Caco-2 (cell line): ENCODE measurements at regions of chr10 and their contacts with region 1.

Region 1: GRCh38 chr10:77485847-77486246 is 151.8 kb downstream of the KCNMA1 start:
- DNase-seq: peak; percentile 67 to 70
- H3K4me3 ChIP-seq: no peak overlapping the region
- H3K4me3 Mint-ChIP-seq: no peak overlapping the region
- H3K27ac Mint-ChIP-seq: no peak overlapping the region
- H3K4me1 ChIP-seq: peaks cover 23% of the 10 kb centered on the region
- H3K4me1 Mint-ChIP-seq: peaks cover 14% of the 10 kb centered on the region
- H3K27me3 ChIP-seq: no peaks in the 10 kb centered on the region
- H3K27me3 Mint-ChIP-seq: no peaks in the 10 kb centered on the region
- CTCF ChIP-seq: no peak

Region 2: GRCh38 chr10:77173615-77174461 is 312.0 kb before region 1 on chr10:
- CTCF ChIA-PET with region 1: interaction called, 10 read pairs
- POLR2A ChIA-PET with region 1: no interaction called
- intact Hi-C with region 1: loop called (anchors 10 kb)
- DNase-seq: peak; percentile 75 to 87
- H3K4me3 ChIP-seq: no peak overlapping the region
- H3K4me3 Mint-ChIP-seq: no peak overlapping the region
- H3K27ac Mint-ChIP-seq: no peak overlapping the region
- H3K4me1 ChIP-seq: no peaks in the 10 kb centered on the region
- H3K4me1 Mint-ChIP-seq: no peaks in the 10 kb centered on the region
- H3K27me3 ChIP-seq: no peaks in the 10 kb centered on the region
- H3K27me3 Mint-ChIP-seq: no peaks in the 10 kb centered on the region
- CTCF ChIP-seq: peak; percentile 84 to 94

Region 3: GRCh38 chr10:77391605-77392235 is 94.1 kb before region 1 on chr10:
- CTCF ChIA-PET with region 1: interaction called, 7 read pairs
- POLR2A ChIA-PET with region 1: no interaction called
- intact Hi-C with region 1: loop called (anchors 1 kb)
- DNase-seq: peak; percentile 79 to 81
- H3K4me3 ChIP-seq: no peak overlapping the region
- H3K4me3 Mint-ChIP-seq: no peak overlapping the region
- H3K27ac Mint-ChIP-seq: no peak overlapping the region
- H3K4me1 ChIP-seq: peaks cover 50% of the 10 kb centered on the region
- H3K4me1 Mint-ChIP-seq: peaks cover 40% of the 10 kb centered on the region
- H3K27me3 ChIP-seq: no peaks in the 10 kb centered on the region
- H3K27me3 Mint-ChIP-seq: no peaks in the 10 kb centered on the region
- CTCF ChIP-seq: peak; percentile 42 to 65

Region 4: DNA sequence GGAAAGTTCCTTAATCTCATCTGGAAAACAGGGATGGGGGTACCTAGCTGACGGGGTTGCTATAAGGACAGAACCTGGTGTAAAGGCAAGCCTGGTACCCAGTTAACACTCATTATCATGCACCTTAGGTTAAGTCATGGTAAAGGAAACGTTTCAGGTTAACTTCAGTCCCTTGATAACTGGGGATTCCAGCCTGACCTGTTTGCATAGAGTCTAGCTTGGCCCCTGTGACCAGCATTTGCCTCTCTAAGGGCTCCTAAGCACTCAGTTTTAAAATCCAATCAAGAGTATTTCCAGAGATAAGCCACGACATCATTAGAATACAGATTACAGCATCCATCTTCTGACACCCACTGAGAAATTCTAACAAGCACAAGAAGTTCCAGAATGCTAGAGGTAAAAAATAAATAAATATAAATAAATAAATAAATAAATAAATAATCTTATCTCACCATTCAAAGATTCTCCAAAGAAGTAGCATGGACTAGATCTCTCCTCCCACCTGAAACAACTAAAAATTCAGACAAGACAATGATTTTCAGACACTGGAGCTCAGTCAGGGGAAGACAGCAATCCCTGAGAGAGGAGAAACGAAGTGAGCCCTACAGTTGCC is 32.8 kb before region 1 on chr10:
- CTCF ChIA-PET with region 1: no interaction called
- POLR2A ChIA-PET with region 1: no interaction called
- intact Hi-C with region 1: loop called (anchors 5 kb)
- DNase-seq: peak; percentile 51 to 58
- H3K4me3 ChIP-seq: no peak overlapping the region
- H3K4me3 Mint-ChIP-seq: no peak overlapping the region
- H3K27ac Mint-ChIP-seq: peak overlapping the region; percentile 59
- H3K4me1 ChIP-seq: peaks cover 37% of the 10 kb centered on the region
- H3K4me1 Mint-ChIP-seq: peaks cover 49% of the 10 kb centered on the region
- H3K27me3 ChIP-seq: no peaks in the 10 kb centered on the region
- H3K27me3 Mint-ChIP-seq: no peaks in the 10 kb centered on the region
- CTCF ChIP-seq: no peak

Region 5: DNA sequence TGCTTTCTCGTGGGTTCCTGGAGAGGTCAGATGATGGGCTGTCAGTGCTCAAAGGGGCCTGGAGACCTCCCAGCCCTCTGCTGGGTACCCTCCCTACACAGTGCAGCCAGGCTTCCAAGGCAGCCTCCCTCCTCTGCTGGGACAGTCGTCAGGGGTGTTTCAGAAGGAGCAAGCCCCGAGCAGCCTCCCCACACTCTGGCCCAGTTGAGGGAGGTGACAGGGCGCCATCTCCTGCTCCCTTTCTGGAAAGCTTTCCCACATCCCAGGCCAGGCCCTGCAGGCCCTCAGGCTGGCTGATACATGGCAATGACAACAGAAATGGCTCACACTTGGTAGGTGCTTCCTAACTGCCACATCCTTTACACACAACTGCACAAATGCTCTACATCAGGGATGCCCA is 119.6 kb after region 1 on chr10:
- CTCF ChIA-PET with region 1: no interaction called
- POLR2A ChIA-PET with region 1: no interaction called
- intact Hi-C with region 1: loop called (anchors 5 kb)
- DNase-seq: peak; percentile 45 to 48
- H3K4me3 ChIP-seq: no peak overlapping the region
- H3K4me3 Mint-ChIP-seq: no peak overlapping the region
- H3K27ac Mint-ChIP-seq: no peak overlapping the region
- H3K4me1 ChIP-seq: peaks cover 17% of the 10 kb centered on the region
- H3K4me1 Mint-ChIP-seq: peaks cover 9% of the 10 kb centered on the region
- H3K27me3 ChIP-seq: no peaks in the 10 kb centered on the region
- H3K27me3 Mint-ChIP-seq: no peaks in the 10 kb centered on the region
- CTCF ChIP-seq: peak in 1 of 2 experiments; percentile 14